Activated CD4-positive, alpha-beta T cell treated with anti-CD3 and anti-CD28 coated beads, Interleukin-2, amount 10 ng/mL, durations not matched to agents 24 days and 14 days (primary cell): ENCODE measurements at regions of chr9 and their contacts with region 1.

Region 1: GRCh38 chr9:124940693-124941453 is at the start of gene GOLGA1:
- DNase-seq: peak; percentile 98
- H3K4me3 Mint-ChIP-seq: peak within 1 kb of the TSS; percentile 95
- H3K27ac Mint-ChIP-seq: peak within 1 kb of the TSS; percentile 99
- H3K4me1 Mint-ChIP-seq: peaks cover 21% of the 10 kb centered on the region
- H3K27me3 Mint-ChIP-seq: no peaks in the 10 kb centered on the region
- total RNA-seq, gene GOLGA1: 17.3 and 19.3 TPM in 2 replicates

Region 2: GRCh38 chr9:124771021-124771866 is 169.6 kb before region 1 on chr9 and contains the start of gene NR6A1:
- intact Hi-C with region 1: loop called (anchors 2 kb)
- DNase-seq: peak; percentile 99
- H3K4me3 Mint-ChIP-seq: peak within 1 kb of the TSS; percentile 91
- H3K27ac Mint-ChIP-seq: peak within 1 kb of the TSS; percentile 94
- H3K4me1 Mint-ChIP-seq: peaks cover 44% of the 10 kb centered on the region
- H3K27me3 Mint-ChIP-seq: peaks cover 63% of the 10 kb centered on the region
- total RNA-seq, gene NR6A1: 2.3 and 2.7 TPM in 2 replicates

Region 3: DNA sequence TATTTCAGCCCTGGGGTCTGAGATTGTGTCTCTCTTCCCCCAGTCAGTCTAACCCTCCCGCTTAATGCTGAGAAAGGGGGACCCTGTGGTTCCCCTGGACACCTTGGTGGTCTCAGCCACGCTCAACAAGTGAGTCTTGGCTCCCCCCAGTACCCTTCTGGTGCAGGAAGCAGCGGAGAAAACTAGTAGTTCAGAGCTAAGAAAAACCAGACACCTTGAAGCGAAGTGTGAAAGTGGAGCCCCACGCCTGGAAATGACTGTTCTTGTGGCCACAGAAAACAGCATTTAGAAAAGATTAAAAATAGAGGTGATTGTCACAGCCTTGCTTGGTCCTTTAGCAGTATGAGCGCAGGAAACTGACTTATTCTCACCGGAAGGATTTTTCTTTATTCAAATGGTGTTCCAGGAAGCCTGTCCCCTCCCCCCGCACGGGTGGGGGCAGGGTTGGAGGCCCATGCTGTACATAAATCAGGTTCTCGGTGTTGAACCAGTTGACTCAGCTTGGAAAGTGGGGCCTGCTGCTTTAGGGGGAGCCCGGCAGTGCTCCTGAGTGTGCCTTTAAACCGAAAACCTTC is 70.8 kb before region 1 on chr9:
- intact Hi-C with region 1: loop called (anchors 1 kb)
- DNase-seq: peak; percentile 94
- H3K4me3 Mint-ChIP-seq: peak overlapping the region; percentile 99
- H3K27ac Mint-ChIP-seq: peak overlapping the region; percentile 99
- H3K4me1 Mint-ChIP-seq: peaks cover 42% of the 10 kb centered on the region
- H3K27me3 Mint-ChIP-seq: no peaks in the 10 kb centered on the region

Region 4: GRCh38 chr9:125119643-125120286 is 178.9 kb after region 1 on chr9:
- intact Hi-C with region 1: loop called (anchors 2 kb)
- DNase-seq: peak; percentile 69
- H3K4me3 Mint-ChIP-seq: no peak overlapping the region
- H3K27ac Mint-ChIP-seq: peak overlapping the region; percentile 20
- H3K4me1 Mint-ChIP-seq: peaks cover 28% of the 10 kb centered on the region
- H3K27me3 Mint-ChIP-seq: no peaks in the 10 kb centered on the region

Region 5: GRCh38 chr9:125189361-125190289 is 248.8 kb after region 1 on chr9 and contains the start of gene PPP6C:
- intact Hi-C with region 1: loop called (anchors 1 kb)
- DNase-seq: peak; percentile 99
- H3K4me3 Mint-ChIP-seq: peak within 1 kb of the TSS; percentile 98
- H3K27ac Mint-ChIP-seq: peak within 1 kb of the TSS; percentile 96
- H3K4me1 Mint-ChIP-seq: peaks cover 30% of the 10 kb centered on the region
- H3K27me3 Mint-ChIP-seq: no peaks in the 10 kb centered on the region
- total RNA-seq, gene PPP6C: 48.1 and 52.5 TPM in 2 replicates

Region 6: DNA sequence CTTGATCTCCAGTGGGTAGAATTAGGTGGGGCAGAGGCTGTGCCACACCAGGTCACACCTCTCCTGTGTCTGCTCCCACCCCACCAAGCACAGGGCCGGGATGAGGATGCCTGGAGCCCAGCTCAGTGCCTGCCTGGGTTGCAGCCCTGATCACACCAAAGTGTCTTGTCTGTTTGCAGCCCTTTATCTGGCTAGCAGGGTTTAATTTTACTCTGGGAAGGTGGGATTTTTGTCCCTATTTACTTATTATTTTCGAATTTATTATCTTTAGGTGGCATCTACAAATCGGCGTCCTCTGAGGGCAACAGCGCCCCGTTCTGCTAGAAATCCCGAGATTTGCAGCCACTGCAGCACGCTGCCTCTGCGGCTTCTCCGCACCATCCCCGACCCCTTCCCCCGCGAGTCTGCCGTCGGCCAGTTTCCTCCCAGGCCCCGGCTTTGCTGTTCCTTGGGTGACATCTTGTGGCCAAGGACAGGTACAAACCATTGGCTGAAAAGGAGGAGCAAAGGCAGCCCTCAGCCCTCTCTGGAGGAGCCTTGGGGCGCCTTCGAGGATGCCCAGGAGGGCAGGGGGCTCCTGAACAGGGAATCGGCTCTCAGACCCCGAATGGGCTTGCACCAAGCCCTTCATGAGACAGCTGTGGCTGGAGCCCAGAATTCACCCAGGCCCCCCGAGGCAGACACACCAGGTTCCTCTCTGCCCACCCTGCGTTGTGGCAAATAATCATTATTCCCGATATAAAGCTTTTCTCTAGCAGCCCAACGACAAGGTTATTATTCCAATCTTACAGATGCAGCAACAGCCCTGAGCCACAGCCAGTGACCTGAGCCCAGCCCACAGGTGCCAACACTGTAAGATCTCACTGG is 433.8 kb after region 1 on chr9:
- intact Hi-C with region 1: loop called (anchors 5 kb)
- DNase-seq: peak; percentile 90
- H3K4me3 Mint-ChIP-seq: peak overlapping the region; percentile 70
- H3K27ac Mint-ChIP-seq: no peak overlapping the region
- H3K4me1 Mint-ChIP-seq: peaks cover 4% of the 10 kb centered on the region
- H3K27me3 Mint-ChIP-seq: peaks cover 3% of the 10 kb centered on the region

Region 7: GRCh38 chr9:125393426-125393825 is 452.6 kb after region 1 on chr9:
- intact Hi-C with region 1: no loop called
- DNase-seq: no peak
- H3K4me3 Mint-ChIP-seq: no peak overlapping the region
- H3K27ac Mint-ChIP-seq: no peak overlapping the region
- H3K4me1 Mint-ChIP-seq: no peaks in the 10 kb centered on the region
- H3K27me3 Mint-ChIP-seq: no peaks in the 10 kb centered on the region